Colonic mucosa (tissue), 4 donors: ENCODE measurements at regions of chr12 and their contacts with region 1.

Region 1: DNA sequence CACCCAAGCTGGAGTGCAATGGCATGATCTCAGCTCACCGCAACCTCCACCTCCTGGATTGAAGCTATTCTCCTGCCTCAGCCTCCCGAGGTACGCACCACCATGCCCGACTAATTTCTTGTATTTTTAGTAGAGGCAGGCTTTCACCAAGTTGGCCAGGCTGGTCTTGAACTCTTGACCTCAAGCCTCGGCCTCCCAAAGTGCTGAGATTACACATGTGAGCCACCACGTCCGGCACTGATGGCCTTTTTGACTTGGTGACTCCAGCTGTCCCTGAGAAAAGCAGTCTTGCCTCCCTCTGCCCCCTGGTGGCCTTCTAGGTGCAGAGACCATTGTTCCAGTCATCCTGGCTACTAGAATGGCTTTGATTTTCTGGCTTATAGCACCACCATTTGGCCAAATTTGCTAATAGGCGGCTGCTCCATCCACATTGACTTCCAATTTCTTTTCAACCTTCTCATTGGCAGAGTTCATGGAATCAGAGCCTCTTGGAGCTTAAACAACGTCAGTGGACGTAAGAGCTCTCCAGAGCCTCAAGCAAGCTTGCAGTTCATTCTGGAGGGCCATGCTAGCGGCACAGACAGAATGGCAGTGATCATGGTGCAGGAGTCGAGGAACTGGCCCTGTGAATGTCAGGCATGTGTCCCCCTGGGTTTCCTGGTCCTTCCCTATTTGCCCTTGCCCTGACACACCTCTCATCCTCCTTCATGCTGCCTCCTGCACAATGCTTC is 25.4 kb upstream of the EIF4B start:
- DNase-seq: peak; percentile 95
- H3K4me3 ChIP-seq: no peak overlapping the region
- H3K27ac ChIP-seq: no peak overlapping the region
- H3K4me1 ChIP-seq: no peaks in the 10 kb centered on the region
- H3K27me3 ChIP-seq: no peaks in the 10 kb centered on the region
- CTCF ChIP-seq: peak; percentile 94

Region 2: GRCh38 chr12:52837413-52837741 is 143.5 kb before region 1 on chr12:
- intact Hi-C with region 1: no loop called
- DNase-seq: no peak
- H3K4me3 ChIP-seq: no peak overlapping the region
- H3K27ac ChIP-seq: no peak overlapping the region
- H3K4me1 ChIP-seq: no peaks in the 10 kb centered on the region
- H3K27me3 ChIP-seq: no peaks in the 10 kb centered on the region
- CTCF ChIP-seq: no peak

Region 3: DNA sequence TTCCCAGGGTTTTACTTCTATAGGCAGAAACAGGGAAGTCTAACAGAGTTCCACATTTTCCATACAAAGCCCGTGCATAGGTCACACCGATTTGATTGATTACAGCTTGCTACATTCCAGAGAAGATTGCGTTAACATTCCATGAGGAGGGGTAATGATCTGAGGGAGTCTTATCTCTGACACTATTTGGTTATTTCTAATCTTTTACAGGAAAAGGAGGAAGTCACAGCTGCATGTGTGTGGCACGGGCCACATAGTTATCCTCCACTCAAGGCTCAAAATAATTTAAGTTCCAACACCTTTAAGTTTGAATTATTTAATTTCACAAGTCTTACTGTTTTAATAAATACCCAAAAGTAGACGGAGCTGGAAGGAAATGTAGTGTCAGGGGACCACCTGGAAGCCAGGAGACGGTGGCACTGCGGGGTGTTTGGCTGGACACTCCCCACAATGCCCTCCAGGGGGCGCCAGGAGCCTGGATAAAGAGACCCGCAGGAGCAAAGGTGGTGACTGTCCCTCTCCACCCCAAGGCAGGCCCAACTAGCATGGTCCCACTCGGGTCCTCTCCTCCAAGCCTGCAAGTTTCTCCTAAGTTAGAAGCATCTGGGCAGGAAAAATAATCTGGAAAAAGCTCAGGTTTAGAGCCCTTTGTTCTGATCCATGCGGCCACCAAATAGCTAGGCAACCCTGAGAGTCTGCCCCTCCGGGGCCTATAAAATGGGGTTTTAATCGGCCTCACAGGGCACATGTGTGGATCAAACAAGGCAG is 96.1 kb before region 1 on chr12:
- intact Hi-C with region 1: loop called (anchors 1 kb)
- DNase-seq: peak; percentile 93
- H3K4me3 ChIP-seq: no peak overlapping the region
- H3K27ac ChIP-seq: no peak overlapping the region
- H3K4me1 ChIP-seq: no peaks in the 10 kb centered on the region
- H3K27me3 ChIP-seq: no peaks in the 10 kb centered on the region
- CTCF ChIP-seq: peak; percentile 95